Naive thymus-derived CD4-positive, alpha-beta T cell (primary cell): ENCODE measurements at regions of chr1 and their contacts with region 1.

Region 1: GRCh38 chr1:158998781-158999161 is 10.9 kb upstream of the IFI16 start:
- DNase-seq: peak in 7 of 9 donors; percentile 43 to 74 (median 65)
- ATAC-seq: peak; percentile 88
- H3K4me3 ChIP-seq: no peak overlapping the region
- H3K4me3 Mint-ChIP-seq: peak overlapping the region in 7 of 10 donors; percentile 1 to 65 (median 44)
- H3K27ac ChIP-seq: no peak overlapping the region
- H3K27ac Mint-ChIP-seq: peak overlapping the region in 5 of 9 donors; percentile 10 to 70 (median 48)
- H3K4me1 ChIP-seq: peaks cover 6 to 21% of the 10 kb centered on the region in 2 donors
- H3K4me1 Mint-ChIP-seq: peaks cover 6 to 36% (median 16%) of the 10 kb centered on the region in 7 donors
- H3K27me3 ChIP-seq: no peaks in the 10 kb centered on the region
- H3K27me3 Mint-ChIP-seq: no peaks in the 10 kb centered on the region

Region 2: DNA sequence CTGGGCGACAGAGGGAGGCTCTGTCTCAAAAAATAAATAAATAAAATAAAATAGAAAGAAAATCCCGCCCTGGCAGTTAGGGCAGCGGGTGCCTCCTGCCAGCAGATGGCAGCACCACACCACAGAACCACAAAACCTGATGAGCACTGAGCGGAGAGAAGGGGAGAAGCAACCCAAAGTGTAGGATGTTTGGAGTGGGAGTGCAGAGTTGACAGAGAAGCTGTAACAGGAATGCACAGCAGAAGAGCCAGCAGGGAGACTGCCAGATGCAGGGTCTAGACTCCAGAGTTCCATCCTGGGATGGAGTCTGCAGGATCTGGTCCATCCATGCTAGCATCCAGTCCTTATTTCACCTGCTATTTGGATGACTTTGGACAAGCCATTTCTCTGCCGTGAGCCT is 1035.1 kb before region 1 on chr1:
- CTCF ChIA-PET with region 1: no interaction called
- POLR2A ChIA-PET with region 1: no interaction called
- intact Hi-C with region 1: loop called in 1 of 2 experiments (anchors 10 kb)
- DNase-seq: peak in 7 of 9 donors; percentile 30 to 55 (median 41)
- ATAC-seq: peak; percentile 51
- H3K4me3 ChIP-seq: no peak overlapping the region
- H3K4me3 Mint-ChIP-seq: peak overlapping the region in 1 of 10 donors; percentile 59
- H3K27ac ChIP-seq: no peak overlapping the region
- H3K27ac Mint-ChIP-seq: no peak overlapping the region
- H3K4me1 ChIP-seq: no peaks in the 10 kb centered on the region
- H3K4me1 Mint-ChIP-seq: no peaks in the 10 kb centered on the region
- H3K27me3 ChIP-seq: no peaks in the 10 kb centered on the region
- H3K27me3 Mint-ChIP-seq: peaks cover 2 to 55% (median 24%) of the 10 kb centered on the region in 5 donors

Region 3: GRCh38 chr1:158248118-158248517 is 750.7 kb before region 1 on chr1:
- CTCF ChIA-PET with region 1: no interaction called
- POLR2A ChIA-PET with region 1: interaction called, 3 read pairs
- intact Hi-C with region 1: loop called (anchors 1 to 2 kb)
- DNase-seq: peak in 8 of 9 donors; percentile 22 to 62 (median 54)
- ATAC-seq: peak; percentile 85
- H3K4me3 ChIP-seq: no peak overlapping the region
- H3K4me3 Mint-ChIP-seq: peak overlapping the region in 9 of 10 donors; percentile 15 to 71 (median 59)
- H3K27ac ChIP-seq: no peak overlapping the region
- H3K27ac Mint-ChIP-seq: peak overlapping the region in 4 of 9 donors; percentile 2 to 81 (median 28)
- H3K4me1 ChIP-seq: peaks cover 18 to 20% of the 10 kb centered on the region in 2 donors
- H3K4me1 Mint-ChIP-seq: peaks cover 18 to 31% (median 24%) of the 10 kb centered on the region in 7 donors
- H3K27me3 ChIP-seq: peaks cover 0 to 3% of the 10 kb centered on the region in 2 donors
- H3K27me3 Mint-ChIP-seq: peaks cover 42 to 76% (median 58%) of the 10 kb centered on the region in 5 donors

Region 4: GRCh38 chr1:158666037-158666436 is 332.7 kb before region 1 on chr1:
- CTCF ChIA-PET with region 1: no interaction called
- POLR2A ChIA-PET with region 1: no interaction called
- intact Hi-C with region 1: loop called in 1 of 2 experiments (anchors 10 kb)
- DNase-seq: no peak
- ATAC-seq: no peak
- H3K4me3 ChIP-seq: no peak overlapping the region
- H3K4me3 Mint-ChIP-seq: no peak overlapping the region
- H3K27ac ChIP-seq: no peak overlapping the region
- H3K27ac Mint-ChIP-seq: no peak overlapping the region
- H3K4me1 ChIP-seq: no peaks in the 10 kb centered on the region
- H3K4me1 Mint-ChIP-seq: no peaks in the 10 kb centered on the region
- H3K27me3 ChIP-seq: no peaks in the 10 kb centered on the region
- H3K27me3 Mint-ChIP-seq: peaks cover 4 to 16% (median 11%) of the 10 kb centered on the region in 5 donors

Region 5: GRCh38 chr1:158931055-158931737 is 67.6 kb before region 1 on chr1 and contains the start of gene PYHIN1:
- CTCF ChIA-PET with region 1: interaction called, 3 read pairs
- POLR2A ChIA-PET with region 1: no interaction called
- intact Hi-C with region 1: loop called in 1 of 2 experiments (anchors 2 kb)
- DNase-seq: peak in 7 of 9 donors; percentile 15 to 42 (median 26)
- ATAC-seq: peak; percentile 86
- H3K4me3 ChIP-seq: peak within 1 kb of the TSS; percentile 66
- H3K4me3 Mint-ChIP-seq: peak within 1 kb of the TSS; percentile 64 to 96 (median 89)
- H3K27ac ChIP-seq: peak within 1 kb of the TSS; percentile 61
- H3K27ac Mint-ChIP-seq: peak within 1 kb of the TSS; percentile 69 to 94 (median 82)
- H3K4me1 ChIP-seq: peaks cover 9 to 34% of the 10 kb centered on the region in 2 donors
- H3K4me1 Mint-ChIP-seq: peaks cover 6 to 47% (median 29%) of the 10 kb centered on the region in 7 donors
- H3K27me3 ChIP-seq: no peaks in the 10 kb centered on the region
- H3K27me3 Mint-ChIP-seq: peaks cover 0 to 6% (median 0%) of the 10 kb centered on the region in 5 donors
- total RNA-seq, gene PYHIN1: 20.3 to 48.2 (median 36.1) TPM

Region 6: DNA sequence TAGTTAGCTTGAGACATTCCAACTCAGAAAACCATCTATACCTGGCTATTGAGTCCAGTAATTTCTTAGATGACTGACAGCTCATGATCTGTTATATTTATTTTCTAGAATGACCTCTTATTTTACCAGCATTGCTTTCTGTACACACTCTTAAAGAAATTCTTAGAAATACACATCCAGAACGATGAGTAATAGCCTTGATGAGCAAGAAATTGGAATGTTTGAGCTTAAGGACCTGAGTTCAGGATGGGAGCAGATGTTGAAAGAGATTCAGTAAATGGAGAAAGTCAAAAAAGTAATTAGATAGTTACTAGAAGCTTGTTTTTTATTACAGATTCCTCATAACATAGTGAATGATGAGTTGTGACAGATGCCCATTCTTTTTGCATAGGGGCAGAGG is 55.7 kb before region 1 on chr1:
- CTCF ChIA-PET with region 1: no interaction called
- POLR2A ChIA-PET with region 1: no interaction called
- intact Hi-C with region 1: no loop called
- DNase-seq: no peak
- ATAC-seq: no peak
- H3K4me3 ChIP-seq: no peak overlapping the region
- H3K4me3 Mint-ChIP-seq: no peak overlapping the region
- H3K27ac ChIP-seq: no peak overlapping the region
- H3K27ac Mint-ChIP-seq: no peak overlapping the region
- H3K4me1 ChIP-seq: peaks cover 0 to 4% of the 10 kb centered on the region in 2 donors
- H3K4me1 Mint-ChIP-seq: peaks cover 0 to 36% (median 0%) of the 10 kb centered on the region in 7 donors
- H3K27me3 ChIP-seq: no peaks in the 10 kb centered on the region
- H3K27me3 Mint-ChIP-seq: peaks cover 0 to 2% (median 0%) of the 10 kb centered on the region in 5 donors